ENCODE measurements at regions of chr1 and their contacts with region 1.

Region 1: GRCh38 chr1:206556750-206557635 is 49.7 kb downstream of the RASSF5 start:
- DNase-seq: peak; percentile 87 to 93
- ATAC-seq: peak; percentile 59 to 86 (median 77)
- H3K4me3 ChIP-seq: peak overlapping the region; percentile 70
- H3K4me3 Mint-ChIP-seq: peak overlapping the region; percentile 96
- H3K27ac ChIP-seq: peak overlapping the region; percentile 87
- H3K27ac Mint-ChIP-seq: peak overlapping the region; percentile 90 to 100
- H3K4me1 ChIP-seq: peaks cover 71% of the 10 kb centered on the region
- H3K4me1 Mint-ChIP-seq: peaks cover 82 to 89% of the 10 kb centered on the region in 2 donors
- H3K27me3 ChIP-seq: no peaks in the 10 kb centered on the region
- H3K27me3 Mint-ChIP-seq: no peaks in the 10 kb centered on the region
- CTCF ChIP-seq: no peak

Region 2: DNA sequence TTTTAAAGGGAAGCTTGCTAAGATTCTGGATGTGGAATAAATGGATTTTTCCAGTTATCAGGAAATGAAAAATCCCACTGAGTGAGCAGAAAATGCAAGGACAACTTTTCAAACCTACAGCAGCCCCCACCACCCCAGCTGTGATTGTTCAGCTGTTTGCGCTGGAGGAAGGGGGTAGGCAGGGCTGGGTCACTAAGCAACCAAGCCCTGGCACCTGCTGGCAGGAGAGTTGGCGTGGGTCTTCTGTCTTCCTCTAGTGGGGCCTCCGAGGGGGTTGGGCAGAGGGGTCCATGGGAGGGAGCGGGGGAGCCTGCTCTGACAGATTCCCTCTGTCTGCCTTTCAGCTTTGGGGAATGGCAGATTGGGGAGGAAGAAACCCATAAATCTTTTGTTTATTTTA is 10.0 kb after region 1 on chr1:
- intact Hi-C with region 1: loop called (anchors 1 kb)
- DNase-seq: no peak
- ATAC-seq: no peak
- H3K4me3 ChIP-seq: no peak overlapping the region
- H3K4me3 Mint-ChIP-seq: peak overlapping the region; percentile 90
- H3K27ac ChIP-seq: peak overlapping the region; percentile 55
- H3K27ac Mint-ChIP-seq: peak overlapping the region; percentile 90 to 100
- H3K4me1 ChIP-seq: peaks cover 91% of the 10 kb centered on the region
- H3K4me1 Mint-ChIP-seq: peaks cover 97 to 98% of the 10 kb centered on the region in 2 donors
- H3K27me3 ChIP-seq: no peaks in the 10 kb centered on the region
- H3K27me3 Mint-ChIP-seq: no peaks in the 10 kb centered on the region
- CTCF ChIP-seq: no peak

Region 3: GRCh38 chr1:206635080-206635977 is 78.3 kb after region 1 on chr1 and contains the start of gene DYRK3:
- intact Hi-C with region 1: no loop called
- DNase-seq: peak; percentile 78 to 94
- ATAC-seq: peak; percentile 94 to 96 (median 95)
- H3K4me3 ChIP-seq: peak within 1 kb of the TSS; percentile 48
- H3K4me3 Mint-ChIP-seq: peak within 1 kb of the TSS; percentile 92
- H3K27ac ChIP-seq: no peak within 1 kb of the TSS
- H3K27ac Mint-ChIP-seq: peak within 1 kb of the TSS; percentile 56 to 79
- H3K4me1 ChIP-seq: peaks cover 17% of the 10 kb centered on the region
- H3K4me1 Mint-ChIP-seq: peaks cover 10 to 21% of the 10 kb centered on the region in 2 donors
- H3K27me3 ChIP-seq: peaks cover 8% of the 10 kb centered on the region
- H3K27me3 Mint-ChIP-seq: peaks cover 20 to 31% of the 10 kb centered on the region in 2 donors
- CTCF ChIP-seq: no peak
- total RNA-seq, gene DYRK3: 0.16 to 0.66 (median 0.43) TPM

Region 4: GRCh38 chr1:206753141-206753540 is 196.1 kb after region 1 on chr1:
- intact Hi-C with region 1: no loop called
- DNase-seq: no peak
- ATAC-seq: no peak
- H3K4me3 ChIP-seq: no peak overlapping the region
- H3K4me3 Mint-ChIP-seq: no peak overlapping the region
- H3K27ac ChIP-seq: no peak overlapping the region
- H3K27ac Mint-ChIP-seq: no peak overlapping the region
- H3K4me1 ChIP-seq: peaks cover 4% of the 10 kb centered on the region
- H3K4me1 Mint-ChIP-seq: peaks cover 0 to 5% of the 10 kb centered on the region in 2 donors
- H3K27me3 ChIP-seq: peaks cover 3% of the 10 kb centered on the region
- H3K27me3 Mint-ChIP-seq: peaks cover 25 to 31% of the 10 kb centered on the region in 2 donors
- CTCF ChIP-seq: no peak

Region 5: DNA sequence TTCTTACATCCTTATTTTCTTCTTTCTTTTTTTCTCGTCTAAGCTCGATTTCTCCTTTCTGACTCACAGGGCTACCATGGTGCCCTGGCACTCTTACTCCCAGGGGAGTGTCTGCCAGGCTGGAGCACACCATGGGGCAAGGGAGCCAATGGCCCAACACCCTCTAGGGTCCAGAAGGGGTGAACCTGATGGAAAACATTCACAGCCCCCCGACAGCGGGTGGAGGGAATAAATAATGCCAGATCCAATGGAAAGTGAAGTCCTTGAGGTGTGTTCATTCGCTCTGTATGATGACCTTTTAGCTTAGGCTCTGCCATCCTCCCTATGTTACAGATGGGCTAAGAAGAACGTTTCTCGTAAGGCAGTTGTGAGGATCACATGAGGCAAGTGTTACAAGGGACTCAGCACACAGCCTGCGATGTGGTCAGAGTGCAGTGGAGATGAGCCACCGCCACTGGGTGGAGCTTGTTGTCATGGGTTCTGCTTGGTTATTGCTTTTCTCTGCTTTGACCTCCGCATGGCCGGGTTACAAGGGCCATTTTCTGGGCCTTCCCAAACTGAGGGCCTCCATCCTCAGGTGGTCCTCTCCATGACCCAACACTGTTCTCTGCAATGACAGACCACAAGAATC is 368.2 kb after region 1 on chr1:
- intact Hi-C with region 1: loop called (anchors 5 kb)
- DNase-seq: peak; percentile 80 to 84
- ATAC-seq: peak; percentile 68 to 86 (median 85)
- H3K4me3 ChIP-seq: no peak overlapping the region
- H3K4me3 Mint-ChIP-seq: no peak overlapping the region
- H3K27ac ChIP-seq: peak overlapping the region; percentile 93
- H3K27ac Mint-ChIP-seq: no peak overlapping the region
- H3K4me1 ChIP-seq: peaks cover 78% of the 10 kb centered on the region
- H3K4me1 Mint-ChIP-seq: peaks cover 9 to 17% of the 10 kb centered on the region in 2 donors
- H3K27me3 ChIP-seq: no peaks in the 10 kb centered on the region
- H3K27me3 Mint-ChIP-seq: no peaks in the 10 kb centered on the region
- CTCF ChIP-seq: no peak

Measured in natural killer cell (primary cell).